Dorsolateral prefrontal cortex (tissue), 120 donors: ENCODE measurements at regions of chr18 and their contacts with region 1.

Region 1: DNA sequence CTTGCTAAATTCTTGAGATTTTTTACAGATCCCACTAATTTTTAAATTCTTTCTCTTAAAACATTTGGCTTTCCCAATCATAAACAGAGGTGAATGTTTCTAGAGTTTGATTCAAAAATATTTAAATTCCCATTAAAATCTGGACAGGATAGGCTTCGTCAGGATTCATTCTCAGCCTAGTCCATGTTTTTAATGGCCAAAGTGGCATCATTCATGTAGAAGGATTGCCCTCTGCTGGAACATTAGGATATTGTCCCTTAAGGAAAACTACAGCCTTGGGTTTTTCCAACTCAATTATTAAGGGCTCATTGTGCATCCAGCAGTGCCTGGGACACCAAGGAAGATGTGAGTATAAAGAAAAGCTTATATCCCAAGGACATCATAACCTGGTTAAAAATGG is 71.7 kb downstream of the TPGS2 start:
- DNase-seq: no peak
- H3K4me3 ChIP-seq: no peak overlapping the region
- H3K27ac ChIP-seq: no peak overlapping the region
- H3K27me3 ChIP-seq: no peaks in the 10 kb centered on the region
- CTCF ChIP-seq: peak; percentile 57 to 89 (median 77)

Region 2: GRCh38 chr18:36095936-36096519 is 661.1 kb before region 1 on chr18:
- intact Hi-C with region 1: loop called in 1 of 2 experiments (anchors 5 kb)
- DNase-seq: no peak
- H3K4me3 ChIP-seq: no peak overlapping the region
- H3K27ac ChIP-seq: no peak overlapping the region
- H3K27me3 ChIP-seq: no peaks in the 10 kb centered on the region
- CTCF ChIP-seq: peak; percentile 47 to 87 (median 68)

Region 3: GRCh38 chr18:36284671-36285295 is 472.3 kb before region 1 on chr18:
- intact Hi-C with region 1: loop called in 1 of 2 experiments (anchors 10 kb)
- DNase-seq: peak in 2 of 10 donors; percentile 41 to 61
- H3K4me3 ChIP-seq: no peak overlapping the region
- H3K27ac ChIP-seq: no peak overlapping the region
- H3K27me3 ChIP-seq: peaks cover 0 to 5% (median 0%) of the 10 kb centered on the region in 45 donors
- CTCF ChIP-seq: peak; percentile 78 to 99 (median 93)

Region 4: GRCh38 chr18:36296650-36297416 is 460.2 kb before region 1 on chr18:
- intact Hi-C with region 1: loop called in 1 of 2 experiments (anchors 10 kb)
- DNase-seq: peak; percentile 48 to 86 (median 74)
- H3K4me3 ChIP-seq: peak overlapping the region; percentile 43 to 89 (median 76)
- H3K27ac ChIP-seq: peak overlapping the region in 52 of 59 donors; percentile 10 to 91 (median 70)
- H3K27me3 ChIP-seq: peaks cover 0 to 5% (median 0%) of the 10 kb centered on the region in 45 donors
- CTCF ChIP-seq: peak in 54 of 56 donors; percentile 33 to 71 (median 55)

Region 5: DNA sequence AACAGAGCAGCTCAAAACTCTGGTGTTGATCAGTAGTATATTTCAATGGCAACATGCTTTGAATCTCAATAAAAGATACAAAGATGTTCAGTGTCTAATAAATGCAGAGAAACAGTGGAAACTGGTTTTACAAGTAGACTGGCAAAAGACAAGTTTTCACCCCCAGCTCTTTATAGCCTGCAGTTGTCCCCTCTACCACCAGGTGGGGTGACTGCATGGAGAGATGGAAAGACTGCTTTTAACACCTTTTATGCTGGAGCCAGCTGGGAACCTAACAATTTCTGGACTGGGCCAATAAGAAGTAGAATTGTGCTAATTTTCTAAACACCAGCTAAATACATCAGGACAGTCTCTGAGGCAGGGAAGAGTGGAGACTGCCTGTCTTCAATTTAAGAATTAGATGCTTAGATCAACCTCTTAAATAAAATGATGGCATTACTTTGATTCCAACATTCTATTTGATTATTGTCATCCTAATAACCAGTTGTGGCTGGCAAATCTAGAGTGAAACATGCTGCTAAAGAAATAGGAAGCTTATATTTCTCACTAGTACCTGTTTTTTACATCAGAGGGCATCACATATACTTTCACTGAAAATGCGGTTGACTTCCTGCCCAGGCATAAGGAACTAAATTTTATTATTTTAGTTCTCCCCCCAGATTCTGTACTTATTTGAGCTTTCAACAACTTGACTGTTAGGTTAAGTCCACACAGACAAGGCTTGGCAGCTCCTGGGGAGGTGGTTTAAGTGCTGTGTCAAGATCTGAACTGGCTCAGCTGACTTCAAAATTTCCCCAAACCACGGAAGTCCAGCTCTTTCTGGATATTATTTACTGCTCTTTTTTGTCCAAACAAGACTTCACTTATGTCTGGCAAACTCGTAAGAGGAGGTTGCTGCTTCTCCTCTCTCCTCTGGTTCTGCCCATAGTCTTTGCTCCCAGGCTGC is 68.8 kb before region 1 on chr18:
- intact Hi-C with region 1: loop called (anchors 5 kb)
- DNase-seq: peak in 8 of 10 donors; percentile 28 to 72 (median 57)
- H3K4me3 ChIP-seq: no peak overlapping the region
- H3K27ac ChIP-seq: no peak overlapping the region
- H3K27me3 ChIP-seq: no peaks in the 10 kb centered on the region
- CTCF ChIP-seq: peak; percentile 50 to 91 (median 86)

Region 6: DNA sequence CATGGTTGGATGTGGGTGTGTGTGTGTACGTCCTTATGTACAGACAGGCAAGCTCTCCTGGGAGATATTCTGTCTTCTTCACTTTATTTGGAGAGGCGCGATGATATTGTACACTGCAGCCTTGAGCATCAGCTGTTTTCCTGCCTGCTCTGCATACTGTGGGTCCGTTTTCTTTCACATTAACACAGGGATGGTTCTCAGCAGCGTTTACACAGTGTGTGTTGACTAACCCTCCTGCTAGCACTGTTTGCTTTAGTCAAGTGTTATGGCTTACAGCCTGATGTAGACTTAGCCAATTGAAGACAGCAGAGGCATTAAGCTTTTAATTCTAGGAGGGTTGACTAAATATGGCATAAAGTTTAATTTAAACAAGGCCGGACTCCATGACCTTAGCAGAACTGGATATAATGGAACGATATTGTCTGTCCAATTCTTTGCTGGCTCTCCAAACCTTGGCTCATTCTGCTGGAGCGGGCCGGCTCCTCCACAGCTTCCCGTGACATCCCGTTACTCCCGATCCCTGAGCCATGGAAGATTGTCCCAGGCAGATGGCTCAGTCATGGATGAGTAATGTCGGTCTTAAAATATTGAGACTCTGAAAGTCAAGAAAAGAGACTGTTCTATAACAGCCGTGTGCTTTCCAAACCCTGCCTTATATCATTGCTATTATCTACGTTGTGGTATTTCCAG is 63.0 kb before region 1 on chr18:
- intact Hi-C with region 1: loop called (anchors 5 kb)
- DNase-seq: peak in 1 of 10 donors; percentile 28
- H3K4me3 ChIP-seq: peak overlapping the region in 31 of 59 donors; percentile 0 to 46 (median 19)
- H3K27ac ChIP-seq: peak overlapping the region in 11 of 59 donors; percentile 1 to 66 (median 22)
- H3K27me3 ChIP-seq: no peaks in the 10 kb centered on the region
- CTCF ChIP-seq: no peak

Region 7: GRCh38 chr18:37012452-37012851 is 255.4 kb after region 1 on chr18:
- intact Hi-C with region 1: no loop called
- DNase-seq: no peak
- H3K4me3 ChIP-seq: no peak overlapping the region
- H3K27ac ChIP-seq: no peak overlapping the region
- H3K27me3 ChIP-seq: no peaks in the 10 kb centered on the region
- CTCF ChIP-seq: no peak